ENCODE measurements at regions of chr12 and their contacts with region 1.

Region 1: DNA sequence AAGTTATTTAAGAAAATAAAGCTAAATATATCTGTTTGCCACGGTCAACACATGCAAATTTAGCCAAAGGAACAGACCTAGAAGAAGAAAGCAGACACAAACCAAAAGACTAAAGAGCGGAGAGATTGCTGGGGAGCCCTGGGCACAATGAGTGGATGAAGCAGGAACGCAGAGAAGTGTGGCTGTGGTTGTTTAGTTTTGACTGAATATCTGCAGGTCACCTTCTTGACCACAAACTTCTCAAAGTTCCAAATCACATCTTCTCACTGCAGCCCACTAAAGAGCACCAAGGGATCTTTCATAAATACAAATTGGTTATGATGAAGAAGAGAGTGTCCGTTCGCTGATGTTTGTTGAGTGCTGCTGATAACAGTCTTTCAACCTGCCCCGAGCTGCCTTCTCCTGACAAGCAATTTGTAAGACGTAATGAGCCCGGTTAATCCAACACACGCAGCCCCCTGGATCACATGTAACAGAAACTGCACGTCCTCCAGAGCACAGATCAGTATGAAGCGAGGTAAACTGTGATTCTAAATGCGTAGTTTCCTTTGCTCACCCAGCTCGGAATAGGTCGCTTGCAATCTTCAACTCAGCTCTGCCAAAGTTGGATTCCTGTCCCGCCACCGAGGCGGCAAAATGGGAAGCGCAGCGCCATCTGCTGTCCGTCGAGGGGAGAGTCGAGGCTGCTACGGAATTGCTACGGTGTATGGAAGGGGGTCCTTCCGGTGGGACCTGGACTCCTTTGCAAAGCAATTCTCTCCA is 120.8 kb downstream of the GXYLT1 start:
- DNase-seq: peak; percentile 66 to 78
- H3K4me3 ChIP-seq: peak overlapping the region in 1 of 3 donors; percentile 10
- H3K27ac ChIP-seq: no peak overlapping the region
- H3K4me1 ChIP-seq: peaks cover 0 to 6% of the 10 kb centered on the region in 2 donors
- H3K27me3 ChIP-seq: no peaks in the 10 kb centered on the region
- CTCF ChIP-seq: peak; percentile 60 to 95 (median 82)
- POLR2A ChIP-seq: no peak

Region 2: GRCh38 chr12:40946612-40947194 is 1077.2 kb before region 1 on chr12:
- intact Hi-C with region 1: loop called (anchors 10 kb)
- DNase-seq: no peak
- H3K4me3 ChIP-seq: no peak overlapping the region
- H3K27ac ChIP-seq: no peak overlapping the region
- H3K4me1 ChIP-seq: no peaks in the 10 kb centered on the region
- H3K27me3 ChIP-seq: no peaks in the 10 kb centered on the region
- CTCF ChIP-seq: peak in 4 of 6 experiments; percentile 17 to 75 (median 70)
- POLR2A ChIP-seq: no peak

Region 3: GRCh38 chr12:41264281-41264680 is 759.6 kb before region 1 on chr12:
- intact Hi-C with region 1: loop called (anchors 10 kb)
- DNase-seq: no peak
- H3K4me3 ChIP-seq: no peak overlapping the region
- H3K27ac ChIP-seq: no peak overlapping the region
- H3K4me1 ChIP-seq: no peaks in the 10 kb centered on the region
- H3K27me3 ChIP-seq: no peaks in the 10 kb centered on the region
- CTCF ChIP-seq: peak in 3 of 6 experiments; percentile 47 to 57 (median 55)
- POLR2A ChIP-seq: no peak

Region 4: DNA sequence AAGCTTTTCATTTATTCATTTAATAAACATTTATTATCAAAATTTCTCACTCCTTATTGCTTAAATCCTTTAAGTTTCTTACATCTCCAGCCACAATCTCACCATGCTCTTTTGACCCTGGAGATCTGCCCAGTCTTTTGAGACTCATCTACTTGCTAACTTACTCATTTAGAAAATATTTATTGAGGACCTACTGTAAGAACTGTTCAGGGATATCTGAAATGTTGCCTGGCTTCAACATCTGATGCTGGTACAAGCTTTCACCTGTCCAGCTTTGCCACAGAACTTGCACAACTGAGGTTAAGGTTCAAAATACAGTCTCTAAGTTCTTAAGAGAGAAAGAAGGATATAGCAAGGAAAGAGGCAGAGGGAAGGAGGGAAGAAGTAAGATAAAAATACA is 138.3 kb after region 1 on chr12:
- intact Hi-C with region 1: no loop called
- DNase-seq: no peak
- H3K4me3 ChIP-seq: no peak overlapping the region
- H3K27ac ChIP-seq: no peak overlapping the region
- H3K4me1 ChIP-seq: peaks cover 0 to 6% of the 10 kb centered on the region in 2 donors
- H3K27me3 ChIP-seq: no peaks in the 10 kb centered on the region
- CTCF ChIP-seq: no peak
- POLR2A ChIP-seq: no peak

Measured in thyroid gland (tissue), 4 donors.